HEK293T (cell line): ENCODE measurements at regions of chr1 and their contacts with region 1.

Region 1: DNA sequence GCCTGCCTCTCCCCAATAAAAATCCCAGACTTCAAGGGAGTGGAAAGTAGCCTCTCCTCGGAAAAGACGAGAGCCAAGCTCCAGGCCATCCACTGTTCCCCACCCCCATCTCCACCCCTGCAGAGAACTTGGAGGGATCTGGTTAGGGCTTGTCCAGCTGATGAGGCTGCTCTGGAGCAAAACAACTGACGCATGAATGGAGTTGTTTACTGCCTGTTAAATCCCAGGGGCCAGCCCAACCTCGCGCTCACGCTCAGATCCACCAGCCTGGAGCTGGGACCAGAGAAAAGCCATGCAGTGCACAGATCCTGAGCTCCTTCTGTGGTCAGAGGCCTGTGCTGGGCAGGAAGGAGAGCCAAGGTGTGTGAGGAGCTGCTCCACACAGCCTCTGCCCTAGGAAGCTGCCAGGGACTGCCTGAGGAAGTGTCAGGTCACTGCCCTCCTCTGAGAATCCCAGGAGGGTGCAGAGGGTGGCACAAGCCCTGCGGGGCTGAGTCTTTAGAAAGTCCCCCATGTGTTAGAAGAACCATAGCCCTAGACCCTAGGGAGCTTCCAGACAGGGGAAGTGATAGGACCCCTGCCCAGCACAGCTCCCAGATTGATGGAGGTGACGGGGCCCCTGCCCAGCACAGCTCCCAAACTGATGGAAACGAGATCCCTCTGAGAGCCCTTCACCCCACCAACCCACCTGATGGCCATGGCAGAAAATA is 109.0 kb upstream of the IPO9 start:
- DNase-seq: peak; percentile 70

Region 2: DNA sequence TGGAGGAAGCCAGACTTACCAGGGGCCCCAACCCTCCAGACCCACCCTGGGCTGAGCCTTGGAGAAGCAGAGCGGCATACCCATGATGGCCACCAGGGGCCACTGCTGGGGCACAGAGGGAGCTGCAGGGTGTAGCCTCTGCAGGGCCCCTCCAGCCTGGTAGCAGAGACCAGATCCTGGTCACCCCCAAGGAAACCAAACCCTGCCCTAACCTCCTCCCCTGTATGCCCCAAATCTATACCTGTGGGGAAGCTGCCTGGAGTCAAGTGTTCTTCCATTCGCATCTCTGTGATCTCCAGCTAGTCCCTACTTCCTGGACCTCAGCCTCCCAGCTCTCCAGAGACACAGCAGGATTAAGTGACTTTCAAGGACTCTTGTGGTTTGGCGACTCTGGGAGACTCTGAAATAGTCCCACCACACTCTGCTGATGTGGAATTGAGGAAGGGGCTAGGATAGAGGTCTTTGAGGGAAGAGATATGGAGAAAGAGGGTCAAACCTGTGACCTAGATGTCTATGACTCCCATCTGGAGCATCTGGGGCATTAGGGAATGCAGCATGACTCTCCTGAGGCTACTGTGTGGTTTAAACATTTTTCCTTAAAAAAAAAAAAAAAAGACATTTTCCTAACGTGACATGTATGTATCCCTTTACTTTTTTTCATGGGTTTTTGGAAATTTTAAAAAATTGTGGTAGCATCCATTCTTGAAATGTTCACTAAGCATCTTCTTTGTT is 10.2 kb before region 1 on chr1:
- CTCF ChIA-PET with region 1: interaction called, 13 read pairs
- POLR2A ChIA-PET with region 1: interaction called, 3 read pairs
- DNase-seq: peak; percentile 83

Region 3: GRCh38 chr1:201766131-201766866 is 46.3 kb after region 1 on chr1:
- CTCF ChIA-PET with region 1: no interaction called
- POLR2A ChIA-PET with region 1: no interaction called
- DNase-seq: no peak